Activated CD8-positive, alpha-beta T cell treated with anti-CD3 and anti-CD28 coated beads, Interleukin-2, amount 10 ng/mL, durations not matched to agents 7 days and 5 days (primary cell): ENCODE measurements at regions of chr14 and their contacts with region 1.

Region 1: GRCh38 chr14:60184146-60184904 is 19.1 kb upstream of the DHRS7 start:
- DNase-seq: peak; percentile 63
- ATAC-seq: peak; percentile 79
- H3K4me3 Mint-ChIP-seq: peak overlapping the region; percentile 69
- H3K27ac Mint-ChIP-seq: peak overlapping the region; percentile 70
- H3K4me1 Mint-ChIP-seq: peaks cover 13% of the 10 kb centered on the region
- H3K27me3 Mint-ChIP-seq: peaks cover 2% of the 10 kb centered on the region

Region 2: GRCh38 chr14:59507063-59507780 is 677.1 kb before region 1 on chr14:
- CTCF ChIA-PET with region 1: interaction called, 13 read pairs
- POLR2A ChIA-PET with region 1: no interaction called
- DNase-seq: peak; percentile 70
- ATAC-seq: peak; percentile 90
- H3K4me3 Mint-ChIP-seq: no peak overlapping the region
- H3K27ac Mint-ChIP-seq: no peak overlapping the region
- H3K4me1 Mint-ChIP-seq: peaks cover 11% of the 10 kb centered on the region
- H3K27me3 Mint-ChIP-seq: peaks cover 12% of the 10 kb centered on the region

Region 3: GRCh38 chr14:59964251-59965007 is 219.9 kb before region 1 on chr14:
- CTCF ChIA-PET with region 1: interaction called, 153 read pairs
- POLR2A ChIA-PET with region 1: interaction called, 6 read pairs
- DNase-seq: peak; percentile 23
- ATAC-seq: peak; percentile 34
- H3K4me3 Mint-ChIP-seq: peak overlapping the region; percentile 76
- H3K27ac Mint-ChIP-seq: peak overlapping the region; percentile 84
- H3K4me1 Mint-ChIP-seq: peaks cover 20% of the 10 kb centered on the region
- H3K27me3 Mint-ChIP-seq: peaks cover 9% of the 10 kb centered on the region

Region 4: GRCh38 chr14:60091550-60092530 is 92.5 kb before region 1 on chr14 and contains the start of gene PCNX4:
- CTCF ChIA-PET with region 1: interaction called, 38 read pairs
- POLR2A ChIA-PET with region 1: no interaction called
- DNase-seq: peak; percentile 96
- ATAC-seq: peak; percentile 94
- H3K4me3 Mint-ChIP-seq: peak within 1 kb of the TSS; percentile 94
- H3K27ac Mint-ChIP-seq: peak within 1 kb of the TSS; percentile 96
- H3K4me1 Mint-ChIP-seq: peaks cover 35% of the 10 kb centered on the region
- H3K27me3 Mint-ChIP-seq: no peaks in the 10 kb centered on the region
- total RNA-seq, gene PCNX4: 35.4 to 36.6 TPM

Region 5: GRCh38 chr14:60195179-60195810 is 11.0 kb after region 1 on chr14:
- CTCF ChIA-PET with region 1: interaction called, 18 read pairs
- POLR2A ChIA-PET with region 1: no interaction called
- DNase-seq: no peak
- ATAC-seq: peak; percentile 42
- H3K4me3 Mint-ChIP-seq: no peak overlapping the region
- H3K27ac Mint-ChIP-seq: no peak overlapping the region
- H3K4me1 Mint-ChIP-seq: peaks cover 7% of the 10 kb centered on the region
- H3K27me3 Mint-ChIP-seq: peaks cover 8% of the 10 kb centered on the region

Region 6: GRCh38 chr14:60226298-60226697 is 42.0 kb after region 1 on chr14:
- CTCF ChIA-PET with region 1: no interaction called
- POLR2A ChIA-PET with region 1: no interaction called
- DNase-seq: no peak
- ATAC-seq: no peak
- H3K4me3 Mint-ChIP-seq: no peak overlapping the region
- H3K27ac Mint-ChIP-seq: no peak overlapping the region
- H3K4me1 Mint-ChIP-seq: no peaks in the 10 kb centered on the region
- H3K27me3 Mint-ChIP-seq: no peaks in the 10 kb centered on the region